HEK293T (cell line): ENCODE measurements at regions of chr19 and their contacts with region 1.

Region 1: GRCh38 chr19:47786566-47786965 is 8.1 kb downstream of the SELENOW start:
- DNase-seq: no peak

Region 2: GRCh38 chr19:47765523-47766358 is 20.8 kb before region 1 on chr19:
- CTCF ChIA-PET with region 1: interaction called, 15 read pairs
- POLR2A ChIA-PET with region 1: no interaction called
- DNase-seq: peak; percentile 74